ENCODE measurements at regions of chr7 and their contacts with region 1.

Region 1: DNA sequence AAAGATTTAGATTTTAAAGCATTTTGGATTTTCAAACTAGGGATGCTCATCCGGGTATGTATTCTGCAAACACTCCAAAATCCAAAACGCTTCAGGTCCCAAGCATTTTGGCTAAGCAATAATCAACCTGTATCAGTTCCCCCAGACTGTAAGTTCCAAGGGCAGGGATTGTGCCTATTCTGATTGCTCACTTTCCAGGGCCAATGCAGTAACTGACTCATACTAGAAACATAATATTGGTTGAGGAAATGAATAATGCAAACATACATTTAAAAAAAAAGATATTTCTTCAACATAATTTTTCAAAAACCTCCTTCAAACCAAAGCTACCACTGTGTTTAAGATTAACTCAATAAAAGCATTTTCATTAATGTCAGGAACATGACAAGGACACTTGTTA is 69.5 kb downstream of the HIBADH start:
- DNase-seq: no peak
- H3K4me3 ChIP-seq: no peak overlapping the region
- H3K27ac ChIP-seq: no peak overlapping the region
- H3K4me1 ChIP-seq: no peaks in the 10 kb centered on the region
- H3K27me3 ChIP-seq: no peaks in the 10 kb centered on the region
- CTCF ChIP-seq: no peak
- EP300 ChIP-seq: no peak
- RAD21 ChIP-seq: no peak

Region 2: GRCh38 chr7:27605689-27606269 is 12.6 kb after region 1 on chr7:
- CTCF ChIA-PET with region 1: interaction called, 18 read pairs
- POLR2A ChIA-PET with region 1: interaction called, 3 read pairs
- DNase-seq: no peak
- H3K4me3 ChIP-seq: peak overlapping the region in 1 of 2 experiments; percentile 1; a peak in 1 of 4 replicates
- H3K27ac ChIP-seq: peak overlapping the region; percentile 62 to 84
- H3K4me1 ChIP-seq: peaks cover 7 to 12% of the 10 kb centered on the region in 2 experiments; a peak in 3 of 4 replicates
- H3K27me3 ChIP-seq: no peaks in the 10 kb centered on the region
- CTCF ChIP-seq: peak; percentile 70
- EP300 ChIP-seq: no peak
- RAD21 ChIP-seq: peak; percentile 59

Measured in SK-N-SH (cell line).